Gastrocnemius medialis (tissue), 4 donors: ENCODE measurements at regions of chr3 and their contacts with region 1.

Region 1: GRCh38 chr3:28476194-28476593 is 127.6 kb upstream of the AZI2 start:
- DNase-seq: no peak
- ATAC-seq: peak in 1 of 2 donors; percentile 55
- H3K4me3 ChIP-seq: no peak overlapping the region
- H3K27ac ChIP-seq: no peak overlapping the region
- H3K4me1 ChIP-seq: no peaks in the 10 kb centered on the region
- H3K27me3 ChIP-seq: no peaks in the 10 kb centered on the region
- CTCF ChIP-seq: peak in 4 of 5 experiments; percentile 39 to 63 (median 45)
- POLR2A ChIP-seq: no peak

Region 2: DNA sequence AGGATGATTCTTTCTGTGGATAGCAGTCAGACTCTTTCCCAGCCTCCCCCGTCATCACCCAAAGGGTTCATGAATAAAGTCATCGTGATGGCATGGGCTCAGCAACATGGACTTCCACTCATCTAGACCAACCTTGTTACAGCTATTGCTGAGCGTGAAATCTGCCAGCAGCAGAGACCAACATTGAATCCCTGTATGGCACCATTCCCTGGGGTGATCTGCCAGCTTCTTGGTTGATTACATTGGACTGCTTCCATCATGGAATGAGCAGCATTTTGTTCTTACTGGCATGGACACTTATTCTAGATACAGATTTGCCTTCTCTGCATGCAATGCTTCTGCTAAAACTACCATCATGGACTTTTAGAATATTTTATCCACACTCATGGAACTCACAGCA is 68.0 kb after region 1 on chr3:
- in situ Hi-C with region 1: no loop called
- intact Hi-C with region 1: no loop called
- DNase-seq: no peak
- ATAC-seq: no peak
- H3K4me3 ChIP-seq: no peak overlapping the region
- H3K27ac ChIP-seq: no peak overlapping the region
- H3K4me1 ChIP-seq: no peaks in the 10 kb centered on the region
- H3K27me3 ChIP-seq: no peaks in the 10 kb centered on the region
- CTCF ChIP-seq: no peak
- POLR2A ChIP-seq: no peak

Region 3: DNA sequence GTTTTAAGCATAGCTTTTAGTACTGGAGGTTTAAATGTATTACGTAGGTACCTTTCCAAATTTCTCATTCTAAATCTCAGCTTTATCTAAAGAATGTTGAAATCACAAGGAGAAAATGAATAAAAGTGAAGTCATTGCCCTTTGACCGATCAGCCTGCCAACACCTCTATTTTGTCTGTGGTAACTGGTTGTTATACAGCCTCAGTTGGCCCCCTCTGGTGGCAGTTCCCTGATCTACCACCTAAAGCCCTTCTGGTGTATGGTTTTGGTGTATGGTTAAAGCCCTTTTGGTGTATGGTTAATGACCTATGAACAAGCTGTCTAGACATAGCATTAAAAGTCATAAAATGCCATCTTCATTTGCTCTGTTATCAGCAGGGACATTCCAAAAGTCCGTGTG is 250.6 kb after region 1 on chr3:
- in situ Hi-C with region 1: no loop called
- intact Hi-C with region 1: loop called (anchors 5 kb)
- DNase-seq: peak; percentile 12 to 50
- ATAC-seq: peak; percentile 74 to 78
- H3K4me3 ChIP-seq: no peak overlapping the region
- H3K27ac ChIP-seq: no peak overlapping the region
- H3K4me1 ChIP-seq: peaks cover 0 to 12% of the 10 kb centered on the region in 2 donors
- H3K27me3 ChIP-seq: no peaks in the 10 kb centered on the region
- CTCF ChIP-seq: peak; percentile 28 to 59 (median 48)
- POLR2A ChIP-seq: no peak

Region 4: DNA sequence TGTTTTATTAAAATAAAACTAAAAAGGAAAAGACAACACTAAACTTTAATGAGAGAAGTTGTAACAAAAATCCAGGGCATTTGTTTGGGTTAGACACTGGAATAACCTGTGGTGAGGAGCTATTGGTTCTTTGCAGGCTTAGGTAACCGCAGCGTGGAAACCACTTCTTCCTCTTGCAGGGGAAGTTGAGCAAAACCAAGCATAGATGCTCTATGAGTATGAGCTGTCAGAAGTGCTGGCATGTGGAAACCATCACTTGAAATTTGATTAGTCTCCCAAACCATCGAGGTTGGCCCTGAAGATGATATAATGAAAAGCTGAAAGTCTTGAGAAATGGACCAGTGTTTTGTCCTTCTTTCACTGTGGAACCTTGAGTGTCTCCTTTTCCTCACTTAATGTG is 677.6 kb after region 1 on chr3:
- in situ Hi-C with region 1: no loop called
- intact Hi-C with region 1: no loop called
- DNase-seq: no peak
- ATAC-seq: no peak
- H3K4me3 ChIP-seq: no peak overlapping the region
- H3K27ac ChIP-seq: no peak overlapping the region
- H3K4me1 ChIP-seq: no peaks in the 10 kb centered on the region
- H3K27me3 ChIP-seq: no peaks in the 10 kb centered on the region
- CTCF ChIP-seq: no peak
- POLR2A ChIP-seq: no peak